HCT116 (cell line): ENCODE measurements at regions of chr2 and their contacts with region 1.

Region 1: DNA sequence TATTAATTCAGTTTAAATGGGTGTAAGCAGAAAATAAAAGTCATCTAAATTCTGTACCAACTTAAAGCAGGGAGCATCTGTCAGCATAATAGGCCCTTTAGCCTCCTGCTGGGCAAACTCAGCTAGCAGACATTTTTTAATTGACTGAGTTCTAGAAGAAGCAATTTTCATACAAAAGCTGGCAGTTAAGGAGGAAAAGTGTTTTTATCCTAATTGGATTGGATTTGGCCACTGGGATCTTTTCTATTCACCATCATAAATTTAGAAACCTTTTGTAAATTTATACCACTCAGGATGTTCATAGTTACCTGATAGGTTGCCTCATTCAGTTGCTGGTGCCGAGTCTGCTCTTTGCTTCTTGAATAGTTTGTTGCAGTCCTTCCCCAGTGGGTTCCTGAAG is 262.7 kb upstream of the FSIP2 start:
- DNase-seq: no peak
- ATAC-seq: no peak
- H3K4me3 ChIP-seq: no peak overlapping the region
- H3K27ac ChIP-seq: no peak overlapping the region
- H3K4me1 ChIP-seq: no peaks in the 10 kb centered on the region
- H3K27me3 ChIP-seq: no peaks in the 10 kb centered on the region
- CTCF ChIP-seq: peak in 2 of 3 experiments; percentile 9 to 14; a peak in 1 of 6 replicates
- POLR2A ChIP-seq: no peak
- RAD21 ChIP-seq: no peak

Region 2: DNA sequence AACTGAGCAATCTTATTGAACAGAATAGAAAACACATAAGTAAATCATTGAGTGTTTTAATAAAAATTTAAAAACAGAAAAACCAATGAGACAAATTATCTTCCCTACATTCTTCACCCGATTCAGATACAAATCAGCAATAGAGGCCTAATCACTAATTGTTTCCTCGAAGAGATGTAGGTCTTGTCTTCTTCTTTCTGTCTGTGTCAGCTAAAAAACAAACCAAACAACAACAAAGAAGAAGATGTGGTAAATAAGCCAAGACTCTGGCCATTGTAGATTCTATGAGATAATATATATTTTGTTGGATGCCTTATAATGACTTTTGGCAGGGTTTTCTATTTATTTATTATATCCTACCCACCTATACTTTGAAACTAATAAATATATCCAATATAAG is 61.8 kb after region 1 on chr2:
- CTCF ChIA-PET with region 1: no interaction called
- POLR2A ChIA-PET with region 1: no interaction called
- RAD21 ChIA-PET with region 1: no interaction called
- intact Hi-C with region 1: loop called (anchors 2 kb)
- DNase-seq: no peak
- ATAC-seq: no peak
- H3K4me3 ChIP-seq: no peak overlapping the region
- H3K27ac ChIP-seq: no peak overlapping the region
- H3K4me1 ChIP-seq: no peaks in the 10 kb centered on the region
- H3K27me3 ChIP-seq: no peaks in the 10 kb centered on the region
- CTCF ChIP-seq: no peak
- POLR2A ChIP-seq: no peak
- RAD21 ChIP-seq: no peak